Prostate gland (tissue), 2 donors: ENCODE measurements at regions of chr17 and their contacts with region 1.

Region 1: DNA sequence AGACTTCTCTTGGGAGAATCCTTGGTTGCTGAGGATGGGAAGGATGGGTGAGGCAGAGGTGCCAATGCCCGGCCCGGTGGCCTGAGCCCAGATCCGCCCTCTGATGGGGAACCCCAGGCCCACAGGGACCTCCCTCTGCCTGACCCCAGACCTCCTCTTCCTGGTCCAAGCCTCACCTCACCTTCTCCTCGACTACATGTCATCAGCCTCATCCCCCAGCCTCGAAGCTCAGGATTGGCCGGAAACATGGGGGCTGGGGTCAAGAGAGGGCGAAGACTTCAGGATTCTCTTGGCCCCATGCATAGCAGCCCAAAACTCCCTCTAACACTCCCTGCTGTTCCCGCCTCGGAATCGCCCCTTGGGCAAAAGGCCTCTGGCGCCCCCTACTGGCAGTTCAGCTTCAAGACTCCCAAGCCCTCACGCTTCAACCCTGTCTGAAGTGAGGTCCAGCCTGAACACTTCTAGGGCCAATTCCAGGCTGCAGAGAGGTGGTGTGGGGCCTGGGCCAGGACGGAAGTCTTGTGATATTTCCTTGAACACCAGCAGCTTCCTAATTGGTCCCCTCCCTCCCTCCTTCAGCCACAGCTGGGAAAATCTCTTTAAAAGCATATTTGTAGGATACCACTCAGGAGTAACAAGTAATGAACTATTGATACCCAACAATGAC is 47.2 kb downstream of the ARHGAP27 start:
- DNase-seq: peak; percentile 83
- H3K4me3 ChIP-seq: no peak overlapping the region
- H3K27ac ChIP-seq: no peak overlapping the region
- H3K4me1 ChIP-seq: no peaks in the 10 kb centered on the region
- H3K27me3 ChIP-seq: no peaks in the 10 kb centered on the region
- CTCF ChIP-seq: peak; percentile 98 to 99 (median 98)
- POLR2A ChIP-seq: no peak

Region 2: DNA sequence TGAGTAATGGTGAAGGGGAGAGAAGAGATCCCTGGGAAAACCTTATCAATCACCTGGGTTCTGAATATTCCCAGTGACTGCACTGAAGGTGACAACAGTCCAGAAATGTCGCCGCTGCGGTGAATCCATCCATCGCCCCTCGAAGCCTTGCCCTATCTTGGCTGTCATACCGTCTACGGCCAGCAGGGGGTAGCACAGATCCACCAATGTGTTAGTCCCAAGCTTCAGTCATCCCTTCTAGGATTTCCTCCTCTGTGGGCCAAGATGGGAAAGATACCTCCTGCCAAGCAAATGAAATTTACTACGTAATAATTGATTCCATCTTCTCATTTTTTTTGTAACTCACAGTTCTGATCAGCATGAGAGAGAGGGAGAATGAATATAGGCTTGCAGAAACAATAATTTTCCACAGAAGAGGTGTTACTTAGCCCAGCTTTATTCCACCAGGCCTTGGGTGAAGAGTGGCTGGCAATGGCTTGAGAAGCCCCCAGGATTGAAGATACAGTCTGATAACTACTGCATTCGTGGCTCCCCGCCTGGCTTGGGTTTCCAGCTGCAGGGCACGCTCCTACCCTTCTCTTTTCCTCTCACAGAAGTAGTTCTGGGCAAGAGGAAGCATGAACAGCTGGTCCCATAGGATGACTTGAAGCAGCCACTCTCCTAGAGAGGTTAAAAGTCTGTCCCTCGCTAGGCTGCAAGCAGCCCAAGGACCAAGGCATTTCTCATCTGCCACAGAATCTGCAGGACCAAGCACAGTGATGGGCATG is 166.4 kb before region 1 on chr17:
- intact Hi-C with region 1: loop called (anchors 2 kb)
- DNase-seq: peak; percentile 85
- H3K4me3 ChIP-seq: no peak overlapping the region
- H3K27ac ChIP-seq: no peak overlapping the region
- H3K4me1 ChIP-seq: no peaks in the 10 kb centered on the region
- H3K27me3 ChIP-seq: no peaks in the 10 kb centered on the region
- CTCF ChIP-seq: peak; percentile 94 to 98 (median 98)
- POLR2A ChIP-seq: no peak